Caco-2 (cell line): ENCODE measurements at regions of chr5 and their contacts with region 1.

Region 1: DNA sequence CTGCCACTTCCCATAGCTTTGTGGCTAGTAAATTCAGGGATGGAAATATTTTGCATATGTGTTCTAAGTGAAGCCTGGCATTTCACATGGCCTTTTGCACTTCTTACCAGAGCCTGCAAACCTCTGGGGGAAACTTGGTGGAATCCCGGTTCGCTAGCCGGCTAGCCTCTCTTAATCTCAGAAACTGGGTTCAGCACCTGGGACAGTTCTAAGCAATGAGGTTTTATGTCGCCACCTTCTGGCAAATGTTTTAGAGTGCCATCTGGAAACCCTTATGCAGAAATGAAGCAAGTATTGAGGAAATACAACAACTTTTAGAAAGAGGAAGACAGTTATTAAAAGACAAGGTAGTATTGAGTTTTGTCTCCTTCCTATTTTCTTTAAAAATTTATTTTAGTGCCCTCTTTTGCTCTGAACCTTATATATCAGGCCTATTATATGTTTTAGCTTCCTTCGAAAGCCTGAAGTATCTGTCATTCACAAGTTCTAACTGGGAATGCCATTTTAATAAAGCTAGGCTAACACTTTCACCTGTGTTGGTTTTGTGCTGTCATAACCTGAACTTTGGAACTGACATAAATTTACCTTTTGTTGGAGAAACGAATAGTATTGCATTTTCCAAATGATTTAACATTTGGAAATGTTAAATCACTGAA is 963 bp upstream of the HTR1A start:
- DNase-seq: peak; percentile 57 to 74
- H3K4me3 ChIP-seq: no peak overlapping the region
- H3K4me3 Mint-ChIP-seq: no peak overlapping the region
- H3K27ac Mint-ChIP-seq: no peak overlapping the region
- H3K4me1 ChIP-seq: no peaks in the 10 kb centered on the region
- H3K4me1 Mint-ChIP-seq: no peaks in the 10 kb centered on the region
- H3K27me3 ChIP-seq: no peaks in the 10 kb centered on the region
- H3K27me3 Mint-ChIP-seq: peaks cover 3% of the 10 kb centered on the region
- CTCF ChIP-seq: peak; percentile 62 to 78

Region 2: DNA sequence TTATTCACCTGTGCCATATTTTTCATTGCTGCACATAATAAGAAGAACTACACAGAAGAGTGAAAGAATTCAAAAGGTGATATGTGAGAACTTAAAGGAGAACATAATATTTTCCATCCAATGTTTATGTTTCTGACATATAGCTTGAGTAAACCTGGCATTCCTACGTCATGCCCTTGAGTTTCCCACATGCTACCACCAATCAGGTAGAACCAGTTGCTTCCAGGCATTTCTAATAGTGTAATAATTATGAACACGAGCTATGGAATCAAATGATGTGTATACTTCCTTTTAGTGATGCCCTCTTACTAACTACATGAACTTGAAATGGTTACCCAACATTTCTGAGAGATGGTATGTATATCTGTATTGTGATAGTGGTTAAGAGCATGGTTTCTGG is 551.3 kb before region 1 on chr5:
- CTCF ChIA-PET with region 1: no interaction called
- POLR2A ChIA-PET with region 1: no interaction called
- intact Hi-C with region 1: loop called (anchors 5 kb)
- DNase-seq: no peak
- H3K4me3 ChIP-seq: no peak overlapping the region
- H3K4me3 Mint-ChIP-seq: no peak overlapping the region
- H3K27ac Mint-ChIP-seq: no peak overlapping the region
- H3K4me1 ChIP-seq: no peaks in the 10 kb centered on the region
- H3K4me1 Mint-ChIP-seq: no peaks in the 10 kb centered on the region
- H3K27me3 ChIP-seq: no peaks in the 10 kb centered on the region
- H3K27me3 Mint-ChIP-seq: peaks cover 6% of the 10 kb centered on the region
- CTCF ChIP-seq: no peak

Region 3: GRCh38 chr5:63760965-63761364 is 202.2 kb before region 1 on chr5:
- CTCF ChIA-PET with region 1: no interaction called
- POLR2A ChIA-PET with region 1: no interaction called
- intact Hi-C with region 1: loop called (anchors 1 kb)
- DNase-seq: no peak
- H3K4me3 ChIP-seq: no peak overlapping the region
- H3K4me3 Mint-ChIP-seq: no peak overlapping the region
- H3K27ac Mint-ChIP-seq: no peak overlapping the region
- H3K4me1 ChIP-seq: no peaks in the 10 kb centered on the region
- H3K4me1 Mint-ChIP-seq: no peaks in the 10 kb centered on the region
- H3K27me3 ChIP-seq: no peaks in the 10 kb centered on the region
- H3K27me3 Mint-ChIP-seq: peaks cover 11% of the 10 kb centered on the region
- CTCF ChIP-seq: no peak